ENCODE measurements at regions of chr15 and their contacts with region 1.

Region 1: DNA sequence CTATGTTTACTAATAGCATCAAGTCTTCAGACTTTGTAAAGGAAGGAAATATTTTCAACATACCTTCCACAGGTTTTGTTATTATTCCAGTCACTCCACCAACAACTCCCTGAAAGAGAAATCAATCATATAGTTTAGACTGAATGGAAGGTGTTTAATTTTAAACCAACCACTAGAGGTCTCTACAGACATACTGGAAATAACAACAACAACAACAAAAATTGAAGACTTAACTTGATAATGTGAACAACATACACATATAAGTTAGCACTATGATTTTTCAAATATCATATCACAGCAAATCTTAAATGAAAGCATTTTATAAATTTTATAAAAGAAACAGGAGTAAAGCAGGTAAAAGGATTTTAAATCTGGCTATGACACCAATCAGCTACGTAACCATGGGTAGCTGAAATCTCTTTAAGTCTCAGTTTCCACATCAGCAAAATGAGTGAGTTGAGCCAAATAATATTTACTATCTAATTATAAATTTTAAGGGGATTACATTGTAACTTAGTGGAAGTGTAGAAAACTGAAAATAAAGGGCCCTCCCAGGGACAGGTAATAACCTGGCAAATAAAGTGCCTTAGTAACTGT is 188.2 kb downstream of the VPS13C start:
- DNase-seq: no peak

Region 2: GRCh38 chr15:62060113-62060895 is 188.3 kb after region 1 on chr15 and contains the start of gene VPS13C:
- intact Hi-C with region 1: loop called (anchors 10 kb)
- DNase-seq: peak; percentile 97
- total RNA-seq, gene VPS13C: 35.2 TPM

Region 3: GRCh38 chr15:62306851-62307504 is 435.0 kb after region 1 on chr15:
- intact Hi-C with region 1: loop called (anchors 10 kb)
- DNase-seq: no peak

Measured in cardiac septum (tissue), 1 donor.